ENCODE measurements at regions of chr9 and their contacts with region 1.

Region 1: DNA sequence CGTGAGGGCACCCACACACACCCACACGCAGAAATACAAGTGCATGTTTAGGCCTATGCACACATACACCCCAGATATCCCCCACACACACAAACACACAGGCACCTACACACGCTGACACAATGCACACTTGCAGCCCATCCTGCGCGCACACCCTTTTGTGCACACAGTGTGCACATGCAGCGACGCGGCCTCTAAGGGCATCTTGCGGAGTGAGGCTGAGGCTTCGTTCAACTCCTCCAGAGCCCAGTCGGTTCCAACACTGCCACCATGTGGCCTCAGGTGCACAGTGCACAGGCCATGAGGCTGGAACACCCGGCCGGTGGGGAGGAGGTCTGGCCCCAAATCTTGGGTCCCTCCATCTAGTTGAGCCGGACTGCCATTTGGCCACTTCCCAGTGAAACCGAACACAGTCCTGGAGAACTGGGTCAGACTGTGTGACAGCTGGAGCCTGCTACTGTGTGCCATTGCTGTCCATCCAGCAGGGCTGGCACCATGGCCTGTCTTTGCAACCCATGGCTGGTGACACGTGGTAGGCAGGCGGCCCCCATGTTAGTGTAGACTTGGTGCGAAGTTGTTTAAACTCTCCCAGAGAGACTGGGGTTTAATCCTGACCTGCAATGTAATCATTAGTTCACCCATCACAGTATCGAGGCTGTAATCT is 97.7 kb upstream of the MVB12B start:
- DNase-seq: peak; percentile 76
- H3K4me3 Mint-ChIP-seq: no peak overlapping the region
- H3K27ac Mint-ChIP-seq: no peak overlapping the region
- H3K4me1 Mint-ChIP-seq: no peaks in the 10 kb centered on the region
- H3K27me3 Mint-ChIP-seq: peaks cover 52% of the 10 kb centered on the region

Region 2: DNA sequence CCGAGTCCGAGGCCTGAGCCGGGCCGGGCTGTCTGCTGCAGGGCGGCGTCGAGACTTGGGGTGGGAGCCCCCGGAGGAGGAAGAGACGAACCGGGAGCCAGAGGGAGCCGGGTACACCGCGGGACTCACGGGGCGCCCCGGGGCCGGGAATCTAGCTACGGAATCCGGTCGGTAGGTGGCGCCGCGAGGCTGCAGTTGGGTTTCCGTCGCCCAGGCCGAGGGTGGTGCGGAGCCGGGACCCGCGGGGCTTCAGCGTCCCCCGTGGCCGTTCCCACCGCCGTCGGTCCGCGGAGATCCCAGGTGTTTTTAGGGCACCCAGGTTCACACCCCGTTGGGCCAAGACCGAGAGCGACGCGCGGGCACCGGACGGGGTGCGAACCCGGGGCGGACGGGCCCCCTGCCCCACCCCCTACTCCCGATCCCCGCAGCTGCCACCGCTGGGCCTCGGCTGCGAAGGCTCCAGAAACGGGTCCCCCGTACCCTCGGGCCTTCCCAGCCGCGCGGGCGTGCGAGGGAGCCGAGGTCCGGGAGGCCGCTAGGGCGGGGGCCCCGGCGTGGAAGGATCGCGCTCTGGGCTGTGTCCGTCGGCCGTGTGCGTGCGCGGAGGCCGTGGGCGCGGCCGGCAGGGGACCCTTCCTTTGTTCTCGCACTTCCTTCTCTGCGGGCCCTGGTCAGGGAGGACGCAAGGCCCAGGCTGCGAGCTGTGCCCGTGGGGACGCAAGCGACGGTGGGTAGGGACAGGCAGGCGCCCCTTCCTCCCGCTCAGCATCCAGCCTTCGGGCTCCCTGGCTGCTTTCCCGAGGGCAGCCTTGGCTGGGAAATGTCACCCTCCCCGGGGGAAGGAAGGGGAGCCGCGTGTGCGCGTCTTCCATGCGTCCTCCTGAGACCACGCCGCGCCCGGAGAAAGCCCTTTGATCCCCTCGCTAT is 820.7 kb before region 1 on chr9:
- CTCF ChIA-PET with region 1: interaction called, 17 read pairs
- DNase-seq: peak; percentile 82
- H3K4me3 Mint-ChIP-seq: peak overlapping the region; percentile 61
- H3K27ac Mint-ChIP-seq: no peak overlapping the region
- H3K4me1 Mint-ChIP-seq: peaks cover 15% of the 10 kb centered on the region
- H3K27me3 Mint-ChIP-seq: peaks cover 58% of the 10 kb centered on the region

Region 3: DNA sequence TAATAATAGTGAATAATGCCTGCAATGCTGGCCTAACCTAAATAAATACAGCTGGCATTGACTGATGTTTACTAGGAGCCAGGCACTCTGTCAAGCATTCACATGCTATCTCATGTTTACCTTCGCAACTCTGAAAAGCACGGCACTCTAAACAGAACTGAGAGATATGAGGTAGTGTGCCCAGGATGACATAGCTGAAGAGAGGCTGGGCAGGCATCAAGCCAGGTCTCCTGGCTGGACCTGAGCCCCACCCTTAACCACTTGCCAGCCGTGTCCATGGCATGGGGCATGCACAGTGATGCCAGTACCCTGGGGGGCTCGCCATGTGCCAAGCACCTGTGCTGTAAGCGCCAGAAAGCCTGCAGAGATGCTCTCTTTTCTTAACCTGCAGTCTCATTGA is 21.7 kb before region 1 on chr9:
- CTCF ChIA-PET with region 1: no interaction called
- DNase-seq: no peak
- H3K4me3 Mint-ChIP-seq: no peak overlapping the region
- H3K27ac Mint-ChIP-seq: no peak overlapping the region
- H3K4me1 Mint-ChIP-seq: no peaks in the 10 kb centered on the region
- H3K27me3 Mint-ChIP-seq: peaks cover 27% of the 10 kb centered on the region

Region 4: DNA sequence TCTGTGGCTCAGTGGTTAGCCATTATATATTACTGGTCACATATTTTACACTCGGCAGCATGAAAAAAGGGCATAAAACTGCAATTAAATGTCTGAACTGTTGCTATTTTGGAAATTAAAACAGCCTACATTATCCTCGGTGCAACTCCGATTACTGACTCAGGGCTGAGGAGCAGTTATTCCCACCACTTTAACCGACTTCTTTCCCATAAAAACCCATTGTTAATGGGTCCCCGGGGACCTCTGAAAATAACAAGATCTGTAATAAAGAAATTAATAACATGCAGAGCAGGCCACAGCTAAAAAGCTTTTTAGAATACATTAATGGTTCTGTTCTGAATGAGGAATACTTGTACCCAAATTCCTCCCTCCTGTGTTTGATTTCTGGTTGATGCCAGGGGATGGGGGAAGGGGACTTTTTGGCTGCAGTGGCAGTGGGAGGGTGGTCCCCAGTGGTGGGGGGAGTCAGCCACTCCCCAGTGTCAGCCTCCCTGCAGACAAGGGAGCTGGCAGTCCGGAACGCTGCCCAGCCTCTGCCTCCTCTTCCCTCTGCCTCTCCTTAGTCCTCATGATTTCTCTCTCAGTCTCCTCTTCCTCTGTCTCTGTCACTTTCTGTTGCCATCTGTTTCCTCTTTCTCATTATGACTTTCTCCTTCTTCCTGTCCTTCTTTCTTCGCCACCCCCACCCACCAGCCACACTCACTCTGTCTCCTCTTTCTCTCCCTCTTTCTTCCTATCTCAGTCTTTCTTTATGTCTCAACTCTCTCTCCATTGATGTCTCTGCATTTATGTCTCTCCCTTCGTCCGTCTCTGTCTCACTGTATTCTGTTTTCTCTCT is 516.9 kb after region 1 on chr9:
- CTCF ChIA-PET with region 1: no interaction called
- DNase-seq: peak; percentile 38
- H3K4me3 Mint-ChIP-seq: no peak overlapping the region
- H3K27ac Mint-ChIP-seq: peak overlapping the region; percentile 2
- H3K4me1 Mint-ChIP-seq: peaks cover 42% of the 10 kb centered on the region
- H3K27me3 Mint-ChIP-seq: peaks cover 7% of the 10 kb centered on the region

Measured in activated naive CD4-positive, alpha-beta T cell treated with anti-CD3 and anti-CD28 coated beads, Interleukin-2, amount 10 ng/mL, durations not matched to agents 7 days and 5 days (primary cell).